ENCODE measurements at regions of chr7 and their contacts with region 1.

Region 1: DNA sequence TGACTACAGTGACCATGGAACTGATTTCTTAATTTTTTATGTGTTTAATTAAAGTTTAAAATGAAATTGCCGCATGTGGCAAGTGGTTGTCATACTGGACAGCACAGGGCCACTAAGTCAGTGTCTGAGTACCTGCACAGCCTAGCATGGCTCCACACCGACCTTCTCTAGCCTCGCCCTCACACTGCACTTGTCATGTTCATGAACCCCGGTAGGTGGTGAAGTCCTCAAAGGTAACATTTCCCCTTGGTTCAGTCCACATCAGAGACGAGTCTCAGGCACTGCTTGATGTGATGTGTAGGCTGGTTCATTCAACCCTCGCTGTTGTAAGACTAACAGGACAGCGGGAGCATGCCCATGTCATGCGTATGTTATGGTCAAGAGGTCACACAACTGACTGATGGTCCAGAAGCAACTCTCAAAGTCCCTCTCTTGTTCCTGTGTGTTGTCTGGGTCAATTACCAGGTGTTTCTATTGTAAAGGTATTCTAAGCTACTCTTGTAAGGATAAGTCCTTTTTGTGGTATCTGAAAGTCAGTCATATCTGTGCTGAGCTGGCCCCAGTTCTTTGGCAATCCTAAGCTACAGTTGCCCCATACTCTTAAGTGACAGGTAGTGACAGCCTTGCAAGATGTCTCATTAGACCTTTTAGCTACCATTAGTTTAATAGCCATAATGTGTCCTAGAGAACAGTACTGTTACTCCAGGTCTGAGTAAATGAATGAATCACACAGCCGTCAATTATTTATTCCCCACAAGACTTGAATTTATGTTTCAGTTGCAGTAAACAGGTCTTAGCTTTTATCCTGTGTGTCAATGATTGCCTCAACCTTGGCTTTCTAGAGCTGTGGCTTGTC is 32.9 kb upstream of the ZC3HAV1L start:
- DNase-seq: peak in 2 of 14 experiments; percentile 32 to 37
- ATAC-seq: peak; percentile 45
- H3K4me3 ChIP-seq: no peak overlapping the region
- H3K4me3 Mint-ChIP-seq: no peak overlapping the region
- H3K27ac ChIP-seq: peak overlapping the region in 1 of 2 donors; percentile 3
- H3K27ac Mint-ChIP-seq: peak overlapping the region; percentile 56
- H3K4me1 ChIP-seq: peaks cover 51% of the 10 kb centered on the region
- H3K4me1 Mint-ChIP-seq: peaks cover 83% of the 10 kb centered on the region
- H3K27me3 ChIP-seq: no peaks in the 10 kb centered on the region
- H3K27me3 Mint-ChIP-seq: no peaks in the 10 kb centered on the region
- CTCF ChIP-seq: no peak

Region 2: DNA sequence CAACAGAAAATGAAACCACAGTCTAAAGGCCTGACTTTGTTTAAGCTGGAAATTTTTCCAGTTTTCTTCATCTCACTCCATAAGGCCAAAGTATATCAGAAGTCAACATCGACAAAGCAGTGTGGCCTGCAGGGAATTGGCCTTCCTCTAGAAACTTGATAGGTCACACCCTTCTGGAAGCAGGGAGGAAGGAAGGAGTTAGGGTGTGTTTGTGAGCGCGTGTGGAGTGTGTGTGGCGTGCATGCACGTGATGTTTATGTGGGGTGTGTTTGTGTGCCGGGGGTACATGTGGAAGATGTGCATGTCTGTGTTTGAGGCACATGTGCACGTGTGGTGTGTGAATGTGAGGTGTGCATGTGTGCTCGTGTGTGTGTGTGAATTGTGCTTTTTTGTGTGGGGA is 12.1 kb after region 1 on chr7:
- CTCF ChIA-PET with region 1: interaction called, 8 read pairs
- POLR2A ChIA-PET with region 1: interaction called, 11 read pairs
- intact Hi-C with region 1: no loop called
- DNase-seq: no peak
- ATAC-seq: peak; percentile 28
- H3K4me3 ChIP-seq: no peak overlapping the region
- H3K4me3 Mint-ChIP-seq: peak overlapping the region; percentile 21
- H3K27ac ChIP-seq: peak overlapping the region; percentile 38 to 55
- H3K27ac Mint-ChIP-seq: peak overlapping the region; percentile 76
- H3K4me1 ChIP-seq: peaks cover 77% of the 10 kb centered on the region
- H3K4me1 Mint-ChIP-seq: peaks cover 84% of the 10 kb centered on the region
- H3K27me3 ChIP-seq: no peaks in the 10 kb centered on the region
- H3K27me3 Mint-ChIP-seq: no peaks in the 10 kb centered on the region
- CTCF ChIP-seq: no peak

Measured in CD4-positive, alpha-beta T cell (primary cell).